Activated naive CD4-positive, alpha-beta T cell treated with anti-CD3 and anti-CD28 coated beads for 36 hours (primary cell): ENCODE measurements at regions of chr21 and their contacts with region 1.

Region 1: GRCh38 chr21:32278518-32279376 is at the start of gene MIS18A:
- DNase-seq: peak; percentile 98
- H3K4me3 Mint-ChIP-seq: peak within 1 kb of the TSS; percentile 100
- H3K27ac Mint-ChIP-seq: peak within 1 kb of the TSS; percentile 90
- H3K4me1 Mint-ChIP-seq: peaks cover 17% of the 10 kb centered on the region
- H3K27me3 Mint-ChIP-seq: no peaks in the 10 kb centered on the region
- total RNA-seq, gene MIS18A: 37.4 to 37.8 TPM

Region 2: GRCh38 chr21:31731802-31732596 is 546.7 kb before region 1 on chr21 and contains the start of gene SCAF4:
- CTCF ChIA-PET with region 1: no interaction called
- intact Hi-C with region 1: loop called (anchors 1 kb)
- DNase-seq: peak; percentile 75
- H3K4me3 Mint-ChIP-seq: peak within 1 kb of the TSS; percentile 83
- H3K27ac Mint-ChIP-seq: peak within 1 kb of the TSS; percentile 64
- H3K4me1 Mint-ChIP-seq: peaks cover 18% of the 10 kb centered on the region
- H3K27me3 Mint-ChIP-seq: no peaks in the 10 kb centered on the region
- total RNA-seq, gene SCAF4: 39.6 to 40.5 TPM

Region 3: GRCh38 chr21:32412162-32413014 is 133.6 kb after region 1 on chr21 and contains the start of gene EVA1C:
- CTCF ChIA-PET with region 1: no interaction called
- intact Hi-C with region 1: loop called (anchors 2 kb)
- DNase-seq: peak; percentile 61
- H3K4me3 Mint-ChIP-seq: peak within 1 kb of the TSS; percentile 92
- H3K27ac Mint-ChIP-seq: peak within 1 kb of the TSS; percentile 90
- H3K4me1 Mint-ChIP-seq: peaks cover 33% of the 10 kb centered on the region
- H3K27me3 Mint-ChIP-seq: no peaks in the 10 kb centered on the region
- total RNA-seq, gene EVA1C: 5.3 to 5.9 TPM

Region 4: DNA sequence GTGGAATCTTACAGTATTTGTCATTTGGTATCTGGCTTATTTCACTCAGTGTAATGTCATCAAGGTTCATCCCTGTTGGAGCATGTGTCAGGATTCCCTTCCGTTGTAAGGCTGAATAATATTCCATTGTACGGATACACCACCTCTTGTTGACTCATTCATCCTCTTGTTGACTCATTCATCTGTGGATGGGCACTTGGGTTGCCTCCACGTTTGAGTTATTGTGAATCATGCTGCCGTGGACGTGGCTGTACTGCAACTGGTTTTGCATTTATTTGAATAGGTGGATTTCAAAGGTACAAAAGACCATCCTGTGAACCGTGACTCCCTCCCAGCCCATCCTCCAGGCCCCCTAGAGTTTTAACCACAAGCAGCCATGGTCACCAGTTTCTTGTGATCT is 318.5 kb after region 1 on chr21:
- CTCF ChIA-PET with region 1: interaction called, 3 read pairs
- intact Hi-C with region 1: loop called (anchors 1 kb)
- DNase-seq: no peak
- H3K4me3 Mint-ChIP-seq: no peak overlapping the region
- H3K27ac Mint-ChIP-seq: no peak overlapping the region
- H3K4me1 Mint-ChIP-seq: no peaks in the 10 kb centered on the region
- H3K27me3 Mint-ChIP-seq: no peaks in the 10 kb centered on the region

Region 5: GRCh38 chr21:32727687-32728455 is 449.1 kb after region 1 on chr21 and contains the start of gene SYNJ1:
- CTCF ChIA-PET with region 1: no interaction called
- intact Hi-C with region 1: loop called (anchors 1 kb)
- DNase-seq: peak; percentile 94
- H3K4me3 Mint-ChIP-seq: peak within 1 kb of the TSS; percentile 96
- H3K27ac Mint-ChIP-seq: peak within 1 kb of the TSS; percentile 88
- H3K4me1 Mint-ChIP-seq: peaks cover 45% of the 10 kb centered on the region
- H3K27me3 Mint-ChIP-seq: no peaks in the 10 kb centered on the region
- total RNA-seq, gene SYNJ1: 7.4 to 10.9 TPM